Activated CD4-positive, alpha-beta T cell treated with anti-CD3 and anti-CD28 coated beads for 36 hours (primary cell): ENCODE measurements at regions of chr1 and their contacts with region 1.

Region 1: DNA sequence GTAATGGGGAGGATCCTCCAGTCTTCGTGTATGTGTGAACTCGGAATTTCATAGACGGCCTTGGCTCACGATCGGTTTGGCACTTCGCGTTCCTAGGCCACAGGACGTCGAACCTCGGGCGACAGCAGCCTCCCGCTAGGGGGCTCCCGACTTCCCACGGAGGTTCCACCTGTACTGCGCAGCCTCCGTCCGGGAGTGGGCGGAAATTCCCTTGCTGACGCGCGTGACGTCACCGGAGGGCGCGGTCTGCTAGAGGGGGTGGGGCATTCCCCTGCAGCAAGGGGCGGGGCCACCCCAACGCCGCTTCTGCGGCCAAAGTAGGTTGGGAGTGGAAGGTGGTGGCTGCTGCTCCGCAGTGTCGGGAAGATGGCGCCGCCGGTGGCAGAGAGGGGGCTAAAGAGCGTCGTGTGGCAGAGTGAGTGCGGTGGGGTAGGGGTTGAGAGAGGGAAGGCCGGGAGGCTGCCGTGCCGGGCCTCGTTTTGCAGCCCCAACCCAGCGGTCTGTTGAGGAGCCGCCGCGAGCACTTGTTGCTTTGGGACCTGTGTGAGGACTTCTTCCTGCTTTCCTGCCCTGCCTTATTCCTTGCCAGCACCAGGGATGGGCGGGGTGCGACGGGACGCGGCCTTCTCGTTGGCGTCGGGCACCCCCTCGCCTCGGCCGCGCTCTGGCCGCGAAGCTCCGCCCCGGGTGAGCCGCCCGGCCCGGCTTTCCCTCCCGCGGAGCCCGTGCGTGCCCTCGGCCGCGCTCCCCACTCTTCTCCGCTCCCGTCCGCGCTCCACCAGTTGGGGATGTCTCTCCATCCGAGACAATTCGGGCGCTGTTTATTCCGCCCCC is at the start of gene STXBP3:
- DNase-seq: peak; percentile 100
- ATAC-seq: peak; percentile 94
- H3K4me3 Mint-ChIP-seq: peak within 1 kb of the TSS; percentile 96
- H3K27ac Mint-ChIP-seq: peak within 1 kb of the TSS; percentile 99
- H3K4me1 Mint-ChIP-seq: peaks cover 29% of the 10 kb centered on the region
- H3K27me3 Mint-ChIP-seq: no peaks in the 10 kb centered on the region
- total RNA-seq, gene STXBP3: 38.9 to 39.3 TPM

Region 2: GRCh38 chr1:108590957-108591356 is 155.6 kb before region 1 on chr1:
- CTCF ChIA-PET with region 1: no interaction called
- POLR2A ChIA-PET with region 1: no interaction called
- intact Hi-C with region 1: loop called in 1 of 2 experiments (anchors 5 kb)
- DNase-seq: no peak
- ATAC-seq: peak; percentile 79
- H3K4me3 Mint-ChIP-seq: no peak overlapping the region
- H3K27ac Mint-ChIP-seq: no peak overlapping the region
- H3K4me1 Mint-ChIP-seq: peaks cover 63% of the 10 kb centered on the region
- H3K27me3 Mint-ChIP-seq: no peaks in the 10 kb centered on the region

Region 3: DNA sequence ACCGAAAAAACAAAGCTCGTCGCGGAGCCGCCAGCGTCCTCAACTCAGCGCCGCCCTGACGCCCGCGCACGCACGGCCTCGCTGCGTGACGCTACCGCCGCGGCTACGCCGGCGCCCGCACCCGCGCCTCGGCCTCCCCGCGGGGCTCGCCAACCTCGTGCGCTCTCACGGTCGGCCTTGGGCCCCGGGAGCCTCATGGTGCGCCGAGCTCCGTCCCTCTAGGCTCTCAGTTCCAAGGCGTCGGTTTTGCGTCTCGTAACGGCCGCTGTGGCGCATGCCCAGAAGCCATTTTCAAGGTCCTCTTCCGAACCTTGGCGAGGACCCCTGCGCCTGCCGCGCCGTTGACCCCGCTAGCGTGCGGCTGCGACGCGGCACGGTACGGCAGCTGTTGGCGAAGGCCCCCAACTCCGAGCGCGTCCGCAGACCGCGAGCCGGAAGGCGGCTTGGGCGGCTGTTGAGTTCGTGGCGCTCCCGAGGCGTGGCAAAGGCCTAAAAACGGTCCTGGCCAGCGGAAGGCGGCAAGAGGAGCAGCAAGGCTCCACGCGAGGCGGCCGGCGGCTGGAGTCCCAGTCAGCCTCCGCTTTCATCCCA is 85.5 kb before region 1 on chr1 and contains the start of gene HENMT1:
- CTCF ChIA-PET with region 1: no interaction called
- POLR2A ChIA-PET with region 1: no interaction called
- intact Hi-C with region 1: loop called in 1 of 2 experiments (anchors 1 kb)
- DNase-seq: peak; percentile 88
- ATAC-seq: peak; percentile 86
- H3K4me3 Mint-ChIP-seq: peak within 1 kb of the TSS; percentile 78
- H3K27ac Mint-ChIP-seq: peak within 1 kb of the TSS; percentile 94
- H3K4me1 Mint-ChIP-seq: peaks cover 31% of the 10 kb centered on the region
- H3K27me3 Mint-ChIP-seq: no peaks in the 10 kb centered on the region
- total RNA-seq, gene HENMT1: 14.6 to 20.6 TPM

Region 4: DNA sequence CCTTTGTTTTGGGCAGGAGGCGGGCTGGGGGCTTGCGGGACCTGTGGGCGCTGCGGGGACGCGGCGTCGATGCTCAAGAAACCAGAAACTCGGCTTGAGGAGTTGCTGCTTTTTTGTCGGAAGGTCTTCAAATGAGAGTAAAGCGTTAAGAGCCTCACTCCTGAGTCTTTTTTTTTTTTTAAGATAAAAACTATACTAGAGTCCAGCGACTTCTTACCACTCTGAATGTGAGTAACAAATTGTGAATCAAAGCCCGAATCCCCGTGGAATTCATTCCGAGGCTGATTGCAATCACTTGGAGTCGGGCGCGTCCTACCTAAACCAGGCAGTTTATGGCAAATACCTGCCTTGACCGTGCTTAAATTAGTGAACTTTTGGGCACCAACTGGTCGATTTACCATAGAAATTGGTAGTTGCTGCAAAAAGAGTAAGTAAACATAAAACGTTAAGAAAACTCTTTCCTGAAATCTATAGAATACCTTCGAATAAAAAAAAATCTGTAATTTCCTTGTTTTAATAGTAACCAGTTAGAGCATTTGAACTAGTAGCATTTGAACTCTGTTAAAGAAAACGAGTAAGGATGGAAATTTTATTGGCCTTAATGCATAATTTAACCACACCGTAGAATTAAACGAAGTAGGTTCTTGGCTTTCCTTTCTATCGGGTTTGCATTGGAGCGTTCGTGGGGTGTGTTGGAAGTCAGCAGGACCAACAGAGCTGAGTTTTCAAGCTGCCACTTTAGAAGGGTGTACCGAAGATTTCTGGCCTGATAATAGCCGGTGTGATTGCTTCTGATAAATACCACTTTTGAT is 131.0 kb after region 1 on chr1:
- CTCF ChIA-PET with region 1: no interaction called
- POLR2A ChIA-PET with region 1: no interaction called
- intact Hi-C with region 1: loop called in 1 of 2 experiments (anchors 2 kb)
- DNase-seq: no peak
- ATAC-seq: peak; percentile 2
- H3K4me3 Mint-ChIP-seq: peak overlapping the region; percentile 91
- H3K27ac Mint-ChIP-seq: peak overlapping the region; percentile 78
- H3K4me1 Mint-ChIP-seq: peaks cover 5% of the 10 kb centered on the region
- H3K27me3 Mint-ChIP-seq: peaks cover 5% of the 10 kb centered on the region

Region 5: GRCh38 chr1:109041621-109042468 is 295.3 kb after region 1 on chr1 and contains the start of gene WDR47:
- CTCF ChIA-PET with region 1: no interaction called
- POLR2A ChIA-PET with region 1: no interaction called
- intact Hi-C with region 1: loop called in 1 of 2 experiments (anchors 1 kb)
- DNase-seq: peak; percentile 98
- ATAC-seq: peak; percentile 99
- H3K4me3 Mint-ChIP-seq: peak within 1 kb of the TSS; percentile 82
- H3K27ac Mint-ChIP-seq: peak within 1 kb of the TSS; percentile 65
- H3K4me1 Mint-ChIP-seq: peaks cover 16% of the 10 kb centered on the region
- H3K27me3 Mint-ChIP-seq: no peaks in the 10 kb centered on the region
- total RNA-seq, gene WDR47: 6.9 to 7.6 TPM

Region 6: DNA sequence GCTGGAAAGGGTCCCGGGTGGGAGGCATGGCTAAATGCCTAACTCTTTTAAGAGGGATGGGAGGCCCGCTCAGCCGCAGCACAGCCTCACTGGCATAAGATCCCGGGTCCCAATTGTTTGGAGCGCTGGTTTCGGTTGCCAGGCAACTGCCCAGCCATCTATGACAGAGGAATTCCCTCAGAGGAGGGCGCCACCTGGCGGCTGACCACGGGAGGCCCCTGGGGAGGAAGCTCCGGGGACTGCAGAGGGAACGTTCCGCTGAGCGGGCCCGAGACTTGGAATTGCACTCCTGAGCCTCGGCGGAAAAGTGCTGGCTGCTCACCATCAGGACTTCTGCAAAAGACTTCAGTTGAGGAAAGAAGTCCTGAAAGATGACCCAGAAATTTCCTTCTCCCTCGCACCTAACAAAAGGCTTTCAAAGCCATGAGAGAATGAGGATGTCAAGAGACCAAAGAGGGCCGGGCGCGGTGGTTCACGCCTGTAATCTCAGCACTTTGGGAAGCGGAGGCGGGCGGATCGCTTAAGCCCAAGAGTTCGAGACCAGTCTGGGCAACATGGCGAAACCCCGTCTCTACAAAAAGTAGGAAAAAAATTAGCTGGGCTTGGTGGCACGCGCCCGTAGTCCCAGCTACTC is 366.2 kb after region 1 on chr1:
- CTCF ChIA-PET with region 1: no interaction called
- POLR2A ChIA-PET with region 1: no interaction called
- intact Hi-C with region 1: loop called in 1 of 2 experiments (anchors 2 kb)
- DNase-seq: peak; percentile 95
- ATAC-seq: peak; percentile 62
- H3K4me3 Mint-ChIP-seq: peak overlapping the region; percentile 71
- H3K27ac Mint-ChIP-seq: peak overlapping the region; percentile 65
- H3K4me1 Mint-ChIP-seq: peaks cover 41% of the 10 kb centered on the region
- H3K27me3 Mint-ChIP-seq: no peaks in the 10 kb centered on the region